Posterior vena cava (tissue), 2 donors: ENCODE measurements at regions of chr18 and their contacts with region 1.

Region 1: DNA sequence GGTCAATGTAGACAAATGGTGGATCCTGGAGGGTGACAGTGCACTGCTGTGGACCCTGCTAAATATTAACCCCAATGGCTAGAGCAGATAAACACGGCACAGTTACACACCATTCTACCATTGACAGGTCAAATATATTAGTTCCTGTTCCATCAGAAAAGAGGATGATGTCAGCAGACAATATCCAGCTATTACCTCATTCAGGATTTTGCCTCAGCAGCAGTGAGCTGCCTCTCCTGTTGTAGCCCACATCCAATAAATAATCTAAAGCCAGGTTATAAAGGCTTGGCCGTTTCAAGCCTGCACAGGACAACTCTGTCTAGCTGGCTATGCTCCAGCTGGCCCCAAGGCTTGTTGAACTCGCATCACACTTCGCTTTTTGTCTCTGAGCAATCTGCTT is 31.6 kb upstream of the NETO1 start:
- DNase-seq: no peak

Region 2: DNA sequence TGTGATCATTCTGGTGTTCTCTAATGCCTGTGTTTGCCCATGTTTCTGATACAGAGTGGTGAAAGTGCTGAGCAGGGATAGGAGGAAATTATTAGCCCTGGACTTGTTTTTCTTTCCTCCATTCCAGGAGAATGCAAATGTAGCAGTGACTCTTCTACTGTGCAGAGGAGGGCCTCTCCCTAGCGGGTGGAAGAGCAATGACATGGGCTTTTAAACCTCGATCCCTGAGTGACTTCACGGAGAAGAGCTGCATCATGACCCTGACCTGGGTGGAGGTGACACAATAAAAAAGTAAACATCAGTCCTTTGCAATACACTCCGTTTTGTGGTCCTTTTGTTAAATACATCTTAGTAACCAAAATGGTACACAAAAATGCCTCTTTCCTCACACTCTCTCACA is 36.4 kb after region 1 on chr18:
- intact Hi-C with region 1: loop called in 1 of 2 experiments (anchors 2 kb)
- DNase-seq: no peak